Thyroid gland (tissue), 4 donors: ENCODE measurements at regions of chr15 and their contacts with region 1.

Region 1: DNA sequence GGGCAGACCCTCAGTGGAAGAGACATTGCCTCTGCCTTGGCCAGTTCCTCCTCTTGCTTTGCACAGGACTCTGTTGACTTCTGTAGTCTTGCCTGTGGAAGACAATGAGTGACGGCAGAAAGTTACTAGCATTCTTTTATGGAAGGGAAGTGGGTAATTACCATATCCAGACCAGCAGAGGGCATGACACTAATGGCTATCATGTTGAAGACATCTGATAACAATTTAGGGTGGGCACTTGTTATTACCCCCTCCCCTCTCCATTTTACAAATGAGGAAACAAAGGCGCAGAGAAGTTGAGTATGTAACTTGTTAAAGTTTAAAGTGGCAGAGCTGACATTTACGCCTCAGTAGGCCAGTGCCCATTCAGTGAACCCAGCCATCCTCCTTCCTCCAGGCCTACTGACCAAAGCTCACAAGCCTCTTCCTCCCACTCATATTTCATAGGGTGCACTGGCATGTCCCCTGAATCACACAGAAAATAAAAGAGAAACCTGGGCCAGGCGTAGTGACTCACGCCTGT is 48.2 kb upstream of the FMN1 start:
- DNase-seq: peak; percentile 16 to 19
- H3K4me3 ChIP-seq: no peak overlapping the region
- H3K27ac ChIP-seq: peak overlapping the region; percentile 51 to 88 (median 51)
- H3K4me1 ChIP-seq: peaks cover 15% of the 10 kb centered on the region in 2 donors
- H3K27me3 ChIP-seq: no peaks in the 10 kb centered on the region
- CTCF ChIP-seq: peak in 5 of 6 experiments; percentile 10 to 71 (median 55)
- POLR2A ChIP-seq: no peak

Region 2: DNA sequence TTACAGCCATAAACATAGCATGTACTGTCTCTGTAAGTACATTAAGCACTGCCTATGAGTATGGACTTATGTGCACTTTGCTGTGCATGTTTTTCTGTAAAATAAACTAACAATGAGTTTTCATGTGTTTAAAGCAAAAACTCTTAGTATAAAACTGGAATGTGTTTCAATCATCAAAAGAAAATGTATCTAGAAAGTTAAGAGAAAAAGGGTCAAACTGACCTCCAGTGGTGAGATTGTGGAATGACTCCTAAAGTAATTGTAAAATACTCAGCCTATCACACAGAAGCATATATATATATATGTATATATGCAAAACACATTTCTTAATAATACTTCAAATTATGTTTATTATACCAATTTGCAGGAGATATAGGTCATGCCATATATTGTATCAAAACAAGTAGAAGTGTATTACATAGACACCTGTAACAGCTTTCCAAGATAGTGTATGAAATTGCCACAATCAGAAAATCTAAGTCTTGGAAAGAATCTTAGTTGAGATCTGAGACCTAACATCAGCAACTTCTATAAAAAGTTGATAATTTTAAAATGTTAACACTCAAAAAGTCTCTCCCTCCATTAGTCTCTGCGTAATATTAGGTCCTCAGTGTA is 247.8 kb before region 1 on chr15:
- intact Hi-C with region 1: no loop called
- DNase-seq: no peak
- H3K4me3 ChIP-seq: no peak overlapping the region
- H3K27ac ChIP-seq: no peak overlapping the region
- H3K4me1 ChIP-seq: no peaks in the 10 kb centered on the region
- H3K27me3 ChIP-seq: no peaks in the 10 kb centered on the region
- CTCF ChIP-seq: peak in 4 of 6 experiments; percentile 23 to 68 (median 56)
- POLR2A ChIP-seq: no peak

Region 3: GRCh38 chr15:33142708-33143107 is 100.0 kb before region 1 on chr15:
- intact Hi-C with region 1: no loop called
- DNase-seq: no peak
- H3K4me3 ChIP-seq: no peak overlapping the region
- H3K27ac ChIP-seq: no peak overlapping the region
- H3K4me1 ChIP-seq: no peaks in the 10 kb centered on the region
- H3K27me3 ChIP-seq: no peaks in the 10 kb centered on the region
- CTCF ChIP-seq: no peak
- POLR2A ChIP-seq: no peak

Region 4: GRCh38 chr15:33292717-33293307 is 50.1 kb after region 1 on chr15:
- intact Hi-C with region 1: loop called (anchors 5 kb)
- DNase-seq: peak; percentile 65 to 66
- H3K4me3 ChIP-seq: no peak overlapping the region
- H3K27ac ChIP-seq: no peak overlapping the region
- H3K4me1 ChIP-seq: no peaks in the 10 kb centered on the region
- H3K27me3 ChIP-seq: no peaks in the 10 kb centered on the region
- CTCF ChIP-seq: peak; percentile 29 to 89 (median 60)
- POLR2A ChIP-seq: no peak